ENCODE measurements at regions of chr2 and their contacts with region 1.

Region 1: GRCh38 chr2:136059036-136059472 is 58.9 kb downstream of the CXCR4 start:
- DNase-seq: peak; percentile 63
- ATAC-seq: peak; percentile 63
- H3K4me3 ChIP-seq: no peak overlapping the region
- H3K27ac ChIP-seq: peak overlapping the region; percentile 40; the same call in 1 of the 2 replicates
- H3K4me1 ChIP-seq: peaks cover 51% of the 10 kb centered on the region
- H3K27me3 ChIP-seq: no peaks in the 10 kb centered on the region
- CTCF ChIP-seq: no peak
- EP300 ChIP-seq: peak in 1 of 2 experiments; percentile 45; a peak in 1 of 4 replicates
- POLR2A ChIP-seq: no peak
- RAD21 ChIP-seq: peak; percentile 15; the same call in 1 of the 2 replicates

Region 2: DNA sequence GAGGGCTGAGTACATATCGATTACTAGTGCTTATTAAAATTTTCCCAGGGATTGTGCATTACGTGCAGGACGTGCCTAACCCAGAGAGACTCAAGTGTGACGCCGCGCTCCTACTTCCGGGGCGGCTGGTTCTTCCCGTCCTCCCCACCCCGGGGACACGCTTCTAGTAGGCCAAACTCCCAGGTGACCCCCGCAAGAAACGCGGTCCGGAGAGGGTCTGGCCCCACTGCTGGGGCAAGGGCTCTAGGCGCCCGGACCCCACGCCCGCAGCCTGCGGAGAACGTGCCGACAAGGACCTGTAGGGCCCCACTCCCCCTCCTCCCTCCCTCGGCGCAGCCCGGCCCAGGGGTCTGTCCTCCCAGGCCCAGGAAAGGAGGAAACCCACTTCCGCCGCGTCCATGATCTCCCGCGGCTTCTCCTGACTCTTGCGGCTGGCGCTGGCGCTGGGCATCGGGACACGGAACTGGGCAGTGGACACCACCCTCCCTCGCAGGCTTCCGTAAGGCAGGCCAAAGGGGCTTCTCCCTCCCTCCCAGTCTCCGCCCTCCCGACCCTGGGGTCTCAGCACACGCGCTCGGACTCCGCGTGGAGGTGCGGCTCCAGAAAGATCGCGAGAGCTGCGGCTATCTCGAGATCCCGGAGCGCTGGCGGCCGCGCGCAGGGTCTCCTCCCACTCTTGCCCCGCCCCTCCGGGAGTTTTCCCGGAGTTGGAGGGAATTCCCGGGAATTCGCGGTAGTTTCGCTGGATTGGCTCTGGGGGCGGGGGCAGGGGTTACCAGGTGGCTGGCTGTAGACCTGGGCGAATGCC is 73.8 kb before region 1 on chr2 and contains the start of gene DARS1:
- CTCF ChIA-PET with region 1: interaction called, 7 read pairs
- POLR2A ChIA-PET with region 1: interaction called, 68 read pairs
- RAD21 ChIA-PET with region 1: interaction called, 88 read pairs
- SMC1A ChIA-PET with region 1: interaction called, 102 read pairs
- in situ Hi-C with region 1: no loop called
- intact Hi-C with region 1: loop called (anchors 1 kb)
- DNase-seq: peak; percentile 79
- ATAC-seq: peak; percentile 86
- H3K4me3 ChIP-seq: peak within 1 kb of the TSS; percentile 88
- H3K27ac ChIP-seq: peak within 1 kb of the TSS; percentile 95
- H3K4me1 ChIP-seq: peaks cover 8% of the 10 kb centered on the region
- H3K27me3 ChIP-seq: no peaks in the 10 kb centered on the region
- CTCF ChIP-seq: no peak
- EP300 ChIP-seq: peak in 1 of 2 experiments; percentile 31; a peak in 2 of 4 replicates
- POLR2A ChIP-seq: peak; percentile 95
- RAD21 ChIP-seq: no peak
- polyA plus RNA-seq, gene DARS1: 102 to 134 TPM

Region 3: GRCh38 chr2:136025057-136025973 is 33.7 kb before region 1 on chr2:
- CTCF ChIA-PET with region 1: interaction called, 8 read pairs
- POLR2A ChIA-PET with region 1: interaction called, 80 read pairs
- RAD21 ChIA-PET with region 1: interaction called, 348 read pairs
- SMC1A ChIA-PET with region 1: interaction called, 961 read pairs
- in situ Hi-C with region 1: no loop called
- intact Hi-C with region 1: loop called (anchors 1 kb)
- DNase-seq: no peak
- ATAC-seq: peak; percentile 68
- H3K4me3 ChIP-seq: no peak overlapping the region
- H3K27ac ChIP-seq: no peak overlapping the region
- H3K4me1 ChIP-seq: peaks cover 7% of the 10 kb centered on the region; the same call in 1 of the 2 replicates
- H3K27me3 ChIP-seq: no peaks in the 10 kb centered on the region
- CTCF ChIP-seq: no peak
- EP300 ChIP-seq: no peak
- POLR2A ChIP-seq: no peak
- RAD21 ChIP-seq: no peak

Region 4: DNA sequence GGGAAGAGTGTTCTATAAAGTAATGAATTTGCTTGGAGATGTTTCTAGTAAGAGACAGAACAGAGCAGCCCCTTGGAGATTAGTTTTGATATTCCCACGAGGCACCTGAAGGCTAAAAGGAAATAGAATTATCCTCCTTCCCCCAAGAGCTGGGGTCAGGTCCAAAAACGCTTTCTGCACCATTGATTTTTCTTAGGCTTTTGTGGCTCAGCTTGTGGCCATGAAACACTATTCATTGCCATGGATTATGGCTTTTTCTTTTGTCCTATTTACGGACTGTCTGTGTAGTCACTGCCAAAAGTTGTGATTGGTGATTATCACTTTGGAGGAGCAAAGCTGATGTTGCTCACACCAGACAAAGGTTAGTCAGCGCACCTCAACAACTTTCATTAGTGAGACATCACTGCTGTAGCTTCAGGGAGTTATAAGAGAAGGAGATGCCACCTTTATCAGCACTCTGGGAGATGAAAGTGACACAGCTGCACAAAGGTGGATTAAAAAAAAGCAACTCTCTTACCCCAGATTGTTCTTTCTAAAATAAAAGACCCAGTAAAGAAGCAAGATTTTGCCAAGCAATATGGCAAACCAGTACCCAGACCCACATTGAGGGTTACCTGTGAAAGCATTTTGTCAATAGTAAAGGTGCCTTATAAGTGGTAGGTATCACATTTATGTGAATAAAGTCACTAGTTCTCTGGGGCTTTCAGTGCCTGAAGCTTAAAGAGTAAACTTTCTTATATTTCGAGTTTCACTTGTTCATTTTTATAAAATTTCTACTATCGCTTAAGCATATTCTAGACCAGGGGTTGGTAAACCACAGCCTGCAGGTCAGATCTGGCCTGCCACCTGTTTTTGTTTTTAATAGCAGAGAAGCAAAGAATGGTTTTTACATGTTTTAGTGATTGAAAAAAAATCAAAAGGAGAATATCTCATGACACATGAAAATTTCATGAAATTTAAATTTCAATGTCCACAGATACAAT is 48.3 kb after region 1 on chr2:
- CTCF ChIA-PET with region 1: interaction called, 103 read pairs
- POLR2A ChIA-PET with region 1: interaction called, 23 read pairs
- RAD21 ChIA-PET with region 1: interaction called, 221 read pairs
- SMC1A ChIA-PET with region 1: interaction called, 400 read pairs
- in situ Hi-C with region 1: no loop called
- intact Hi-C with region 1: no loop called
- DNase-seq: no peak
- ATAC-seq: peak; percentile 68
- H3K4me3 ChIP-seq: no peak overlapping the region
- H3K27ac ChIP-seq: no peak overlapping the region
- H3K4me1 ChIP-seq: peaks cover 15% of the 10 kb centered on the region; the same call in 1 of the 2 replicates
- H3K27me3 ChIP-seq: no peaks in the 10 kb centered on the region
- CTCF ChIP-seq: no peak
- EP300 ChIP-seq: peak in 1 of 2 experiments; percentile 59; a peak in 2 of 4 replicates
- POLR2A ChIP-seq: no peak
- RAD21 ChIP-seq: no peak

Region 5: DNA sequence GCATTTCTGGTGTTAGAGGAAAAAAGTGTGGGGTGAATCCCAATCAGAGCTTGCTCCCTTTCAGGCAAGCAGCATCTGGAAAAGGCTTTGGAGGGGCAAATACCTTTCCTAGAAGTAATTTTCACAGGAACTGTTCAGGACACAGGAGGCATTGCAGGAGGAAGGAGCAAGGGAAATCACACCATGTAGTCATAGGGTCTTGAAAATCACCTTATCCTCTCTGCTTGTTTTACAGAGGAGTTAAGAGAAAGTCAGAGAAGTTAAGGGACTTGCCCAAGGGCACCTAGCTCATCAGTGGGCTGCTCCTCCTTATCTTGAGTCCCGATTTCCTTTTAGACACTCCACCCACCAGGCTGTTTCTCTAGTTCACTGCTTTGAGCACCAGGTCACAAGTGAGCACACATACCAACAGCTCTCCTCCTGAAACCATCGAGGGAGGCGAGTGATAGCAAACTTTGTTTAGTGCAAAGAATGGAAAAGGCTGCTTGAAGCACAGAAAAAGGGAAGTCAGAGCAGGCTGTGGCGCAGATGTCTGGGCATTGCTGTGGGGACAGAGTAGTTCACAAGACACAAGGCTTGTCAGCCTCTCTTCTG is 148.1 kb after region 1 on chr2:
- CTCF ChIA-PET with region 1: interaction called, 5 read pairs
- POLR2A ChIA-PET with region 1: interaction called, 13 read pairs
- RAD21 ChIA-PET with region 1: interaction called, 78 read pairs
- SMC1A ChIA-PET with region 1: interaction called, 35 read pairs
- in situ Hi-C with region 1: no loop called
- intact Hi-C with region 1: loop called (anchors 2 kb)
- DNase-seq: peak; percentile 68
- ATAC-seq: peak; percentile 79
- H3K4me3 ChIP-seq: no peak overlapping the region
- H3K27ac ChIP-seq: no peak overlapping the region
- H3K4me1 ChIP-seq: peaks cover 21% of the 10 kb centered on the region
- H3K27me3 ChIP-seq: no peaks in the 10 kb centered on the region; a peak in 1 of 4 replicates
- CTCF ChIP-seq: no peak
- EP300 ChIP-seq: peak; percentile 26 to 55; a peak in 2 of 4 replicates
- POLR2A ChIP-seq: no peak
- RAD21 ChIP-seq: 0 out of 2 replicates have a peak, but pooled peaks have one; percentile 0

Region 6: GRCh38 chr2:136255648-136256463 is 196.8 kb after region 1 on chr2:
- CTCF ChIA-PET with region 1: interaction called, 10 read pairs
- POLR2A ChIA-PET with region 1: interaction called, 18 read pairs
- RAD21 ChIA-PET with region 1: interaction called, 60 read pairs
- SMC1A ChIA-PET with region 1: interaction called, 34 read pairs
- in situ Hi-C with region 1: no loop called
- intact Hi-C with region 1: loop called (anchors 10 kb)
- DNase-seq: no peak
- ATAC-seq: peak; percentile 78
- H3K4me3 ChIP-seq: no peak overlapping the region
- H3K27ac ChIP-seq: no peak overlapping the region
- H3K4me1 ChIP-seq: peaks cover 12% of the 10 kb centered on the region
- H3K27me3 ChIP-seq: no peaks in the 10 kb centered on the region; a peak in 1 of 4 replicates
- CTCF ChIP-seq: peak in 2 of 3 experiments; percentile 9 to 27; a peak in 3 of 6 replicates
- EP300 ChIP-seq: peak in 1 of 2 experiments; percentile 63; a peak in 1 of 4 replicates
- POLR2A ChIP-seq: no peak
- RAD21 ChIP-seq: no peak

Measured in GM12878 (cell line).